Gastrocnemius medialis (tissue), 4 donors: ENCODE measurements at regions of chr7 and their contacts with region 1.

Region 1: DNA sequence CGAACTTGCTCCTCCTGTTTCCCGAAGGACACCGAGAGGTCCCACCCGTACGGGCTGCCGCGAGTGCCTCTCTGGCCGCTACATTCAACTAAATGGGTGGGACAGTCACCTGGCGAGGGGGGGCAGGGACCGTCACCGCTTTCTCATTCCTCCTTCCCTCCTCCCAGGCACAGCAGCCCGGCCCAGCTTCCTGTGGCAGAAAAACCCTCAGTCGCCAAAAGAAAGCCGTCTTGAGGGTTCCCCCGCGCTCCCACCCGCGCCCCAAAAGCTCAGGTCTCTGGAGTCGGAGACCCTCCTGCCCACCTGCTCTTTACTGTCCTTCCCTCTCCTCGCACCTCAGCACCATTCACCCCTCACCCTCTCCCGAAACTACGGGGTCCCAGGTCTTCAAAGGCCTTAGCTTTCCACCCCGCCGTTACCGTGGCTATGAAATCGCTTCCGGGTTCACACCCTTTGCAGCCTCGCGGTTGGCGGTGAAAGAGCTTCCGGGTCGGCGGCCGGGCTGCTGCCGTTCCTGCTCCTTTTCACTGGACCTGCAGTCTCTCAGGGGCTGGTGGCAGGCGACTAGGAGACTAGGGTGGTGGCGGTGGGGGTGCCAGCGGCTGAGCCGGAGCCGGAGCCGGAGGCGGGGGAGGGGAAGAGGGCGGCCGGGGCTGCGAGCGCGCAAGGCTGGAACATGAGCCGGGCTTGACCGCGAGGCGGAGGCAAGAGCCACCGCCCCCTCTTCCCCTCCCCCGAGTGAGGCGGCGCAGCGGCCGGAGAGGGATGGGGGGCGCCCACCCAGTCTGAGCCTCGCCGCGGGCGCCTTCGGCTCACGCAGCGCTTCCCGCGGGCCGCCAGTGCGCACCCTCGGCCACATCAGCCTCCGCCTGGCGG is at the starts of genes ANKIB1 and KRIT1:
- DNase-seq: peak; percentile 83 to 84
- ATAC-seq: peak; percentile 94 to 97
- H3K4me3 ChIP-seq: peak within 1 kb of the TSS; percentile 81 to 98 (median 84)
- H3K27ac ChIP-seq: peak within 1 kb of the TSS; percentile 86 to 98 (median 94)
- H3K4me1 ChIP-seq: peaks cover 28 to 38% of the 10 kb centered on the region in 2 donors
- H3K27me3 ChIP-seq: no peaks in the 10 kb centered on the region
- CTCF ChIP-seq: peak in 2 of 5 experiments; percentile 26 to 33
- POLR2A ChIP-seq: peak; percentile 39 to 56
- total RNA-seq, gene ANKIB1: 11.5 to 24.2 (median 12.5) TPM
- total RNA-seq, gene KRIT1: 28.7 to 47.6 (median 32.5) TPM

Region 2: GRCh38 chr7:91264046-91264923 is 981.4 kb before region 1 on chr7 and contains the start of gene FZD1:
- in situ Hi-C with region 1: no loop called
- intact Hi-C with region 1: loop called (anchors 5 kb)
- DNase-seq: peak; percentile 94 to 96
- ATAC-seq: peak; percentile 92 to 93
- H3K4me3 ChIP-seq: peak within 1 kb of the TSS; percentile 62 to 85 (median 74)
- H3K27ac ChIP-seq: peak within 1 kb of the TSS; percentile 77 to 95 (median 89)
- H3K4me1 ChIP-seq: peaks cover 0 to 8% of the 10 kb centered on the region in 2 donors
- H3K27me3 ChIP-seq: no peaks in the 10 kb centered on the region
- CTCF ChIP-seq: peak in 2 of 5 experiments; percentile 19 to 21
- POLR2A ChIP-seq: peak; percentile 61 to 90
- total RNA-seq, gene FZD1: 2.1 to 4.1 (median 3.5) TPM

Region 3: GRCh38 chr7:92178927-92179924 is 66.5 kb before region 1 on chr7 and contains the start of gene LRRD1:
- in situ Hi-C with region 1: no loop called
- intact Hi-C with region 1: loop called (anchors 2 kb)
- DNase-seq: peak; percentile 47 to 77
- ATAC-seq: peak; percentile 94 to 99
- H3K4me3 ChIP-seq: peak within 1 kb of the TSS; percentile 59 to 69 (median 62)
- H3K27ac ChIP-seq: peak within 1 kb of the TSS; percentile 52 to 76 (median 61)
- H3K4me1 ChIP-seq: no peaks in the 10 kb centered on the region
- H3K27me3 ChIP-seq: no peaks in the 10 kb centered on the region
- CTCF ChIP-seq: peak; percentile 77 to 99 (median 86)
- POLR2A ChIP-seq: no peak
- total RNA-seq, gene LRRD1: not detected